Cardiac septum (tissue), 1 donor: ENCODE measurements at regions of chr15 and their contacts with region 1.

Region 1: DNA sequence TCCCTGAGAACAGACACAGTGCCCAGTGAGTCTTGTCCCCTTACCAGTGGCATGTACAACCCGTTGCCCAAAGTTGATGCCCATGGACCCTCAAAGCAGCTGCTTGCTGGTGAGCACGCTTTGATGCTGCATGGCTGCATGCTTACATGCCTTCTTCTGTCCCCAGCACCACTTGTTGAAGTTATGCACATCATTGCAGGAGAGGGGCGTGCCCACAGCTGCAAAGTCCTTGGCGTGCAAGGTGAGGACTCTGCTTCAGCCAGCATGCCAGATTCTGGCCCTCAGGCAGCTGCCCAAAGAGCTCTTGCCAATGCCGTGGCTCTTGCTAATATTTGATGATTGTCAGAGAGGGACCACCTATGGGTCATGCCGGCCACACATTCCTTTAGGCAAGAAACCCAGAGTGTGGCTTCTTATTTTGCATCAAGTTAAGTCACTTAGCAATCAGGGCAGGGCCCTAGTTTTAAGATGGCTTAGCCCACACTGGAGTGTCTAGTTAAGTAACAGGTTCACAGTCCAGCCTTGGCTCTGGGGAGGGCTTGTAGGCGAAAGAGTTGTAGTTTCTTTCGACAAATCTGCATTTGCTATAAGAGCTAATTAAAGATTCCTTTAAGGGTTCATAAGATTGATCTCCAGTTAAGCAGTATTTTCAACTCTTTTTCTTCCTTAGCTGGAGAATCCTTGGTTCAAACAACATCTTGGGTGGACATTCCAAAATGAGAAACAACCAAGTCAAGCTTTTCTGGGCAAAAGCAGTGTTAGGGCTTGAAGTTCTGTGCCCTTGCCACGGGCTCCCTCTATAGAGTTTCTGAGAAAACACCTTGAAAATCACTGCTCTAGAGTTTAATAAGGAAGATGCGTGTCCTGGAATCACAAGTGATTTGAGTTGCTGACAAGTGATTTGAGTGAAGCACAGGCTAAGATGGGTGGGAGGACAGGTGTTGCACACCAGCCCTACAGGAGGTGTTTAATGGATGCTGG is 128.6 kb downstream of the SLCO3A1 start:
- DNase-seq: no peak

Region 2: DNA sequence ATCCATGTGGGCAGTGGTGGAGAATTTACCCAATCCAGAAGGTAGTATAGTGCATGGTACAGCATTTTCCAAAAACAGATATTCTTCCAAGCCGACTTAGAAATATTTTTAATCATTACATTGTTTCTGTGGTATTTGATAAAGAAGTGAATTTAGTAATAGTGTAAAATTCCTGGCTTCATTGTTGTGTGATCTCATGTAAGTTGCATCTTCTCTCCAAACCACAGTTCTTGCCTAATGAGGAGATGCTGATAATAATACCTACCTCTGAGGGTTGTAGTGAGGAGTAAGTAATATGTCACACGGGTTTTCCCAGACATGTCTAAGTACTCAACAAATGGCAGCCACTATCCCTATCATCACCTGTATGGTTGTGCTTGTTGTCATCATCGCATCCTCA is 38.7 kb after region 1 on chr15:
- intact Hi-C with region 1: loop called (anchors 5 kb)
- DNase-seq: no peak

Region 3: DNA sequence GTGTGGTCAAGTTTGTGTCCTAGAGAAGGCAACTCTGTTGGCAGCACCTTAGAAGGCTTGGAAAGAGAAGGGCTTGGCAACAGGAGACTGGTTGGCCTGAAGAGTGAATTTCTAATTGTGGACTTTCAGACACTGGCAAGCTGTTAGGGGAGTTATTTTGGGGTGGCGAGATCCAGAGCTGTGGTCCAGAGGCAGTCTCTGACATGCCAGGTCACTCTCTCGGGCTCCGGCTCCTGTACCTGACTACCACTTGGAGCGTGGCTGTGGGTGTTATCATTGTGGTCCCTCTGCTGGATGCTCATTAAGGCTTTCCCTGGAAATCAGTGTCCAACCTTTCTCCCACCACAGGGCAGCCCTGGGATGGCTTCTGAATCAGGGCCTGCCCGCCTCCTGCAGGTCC is 80.4 kb after region 1 on chr15:
- intact Hi-C with region 1: loop called (anchors 5 kb)
- DNase-seq: no peak